ENCODE measurements at regions of chr13 and their contacts with region 1.

Region 1: GRCh38 chr13:49300739-49301589 is 53.2 kb downstream of the CDADC1 start:
- DNase-seq: peak in 35 of 42 donors; percentile 34 to 86 (median 70)

Region 2: GRCh38 chr13:49238651-49239050 is 62.3 kb before region 1 on chr13:
- intact Hi-C with region 1: no loop called
- DNase-seq: no peak

Region 3: DNA sequence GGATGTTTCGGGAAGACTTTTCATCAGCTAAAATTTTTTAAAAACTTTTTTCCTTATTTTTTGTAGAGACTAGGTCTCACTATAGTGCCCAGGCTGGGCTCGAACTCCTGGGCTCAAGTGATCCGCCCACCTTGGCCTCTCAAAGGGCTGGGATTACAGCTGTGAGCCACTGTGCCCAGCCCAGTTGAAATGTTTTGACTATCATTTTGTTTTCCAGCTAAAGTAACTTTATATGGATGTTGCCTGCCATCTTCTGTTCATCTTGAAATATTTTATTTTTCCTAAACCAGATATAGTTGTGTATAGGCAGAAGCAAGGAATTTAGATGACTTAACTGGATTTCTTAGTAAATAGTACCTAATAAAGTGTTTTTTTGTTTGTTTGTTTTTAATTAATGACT is 135.9 kb after region 1 on chr13:
- intact Hi-C with region 1: loop called (anchors 2 kb)
- DNase-seq: peak in 22 of 42 donors; percentile 7 to 63 (median 31)

Region 4: GRCh38 chr13:49517461-49517860 is 216.5 kb after region 1 on chr13:
- intact Hi-C with region 1: loop called (anchors 10 kb)
- DNase-seq: peak in 39 of 42 donors; percentile 16 to 81 (median 49)

Region 5: GRCh38 chr13:49606747-49607648 is 306.0 kb after region 1 on chr13:
- intact Hi-C with region 1: loop called (anchors 5 kb)
- DNase-seq: peak; percentile 81 to 96 (median 91)

Measured in head of caudate nucleus (tissue), 42 donors.